Pancreas (tissue), 10 donors: ENCODE measurements at regions of chr20 and their contacts with region 1.

Region 1: DNA sequence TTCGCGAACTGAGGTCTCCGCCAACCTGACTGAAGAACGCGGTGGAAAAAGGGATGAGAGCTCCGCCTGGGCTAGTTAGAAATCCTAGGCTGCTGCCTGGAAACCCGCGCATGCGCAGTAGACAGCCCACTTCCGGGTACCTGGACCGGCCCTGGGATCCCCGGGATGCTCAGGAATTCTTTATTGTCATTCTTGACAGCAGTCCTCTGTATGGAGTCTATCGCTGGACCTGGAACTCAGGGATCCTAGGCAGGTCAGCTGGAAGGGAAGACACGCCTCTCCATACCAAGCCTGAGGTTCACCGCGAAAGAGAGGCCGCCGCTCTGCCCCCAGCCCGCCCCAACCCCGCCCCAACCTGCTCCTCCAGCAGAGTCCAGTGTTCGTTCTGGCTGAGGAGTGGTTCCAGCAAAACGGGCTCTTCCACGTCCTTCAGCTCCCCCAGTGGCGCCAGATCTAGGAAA is 1379.2 kb upstream of the DEFB115 start:
- DNase-seq: peak in 3 of 6 donors; percentile 30 to 82 (median 66)
- ATAC-seq: peak in 3 of 4 donors; percentile 38 to 61 (median 57)
- H3K4me3 ChIP-seq: no peak overlapping the region
- H3K27ac ChIP-seq: no peak overlapping the region
- H3K4me1 ChIP-seq: no peaks in the 10 kb centered on the region
- H3K27me3 ChIP-seq: no peaks in the 10 kb centered on the region
- CTCF ChIP-seq: no peak

Region 2: DNA sequence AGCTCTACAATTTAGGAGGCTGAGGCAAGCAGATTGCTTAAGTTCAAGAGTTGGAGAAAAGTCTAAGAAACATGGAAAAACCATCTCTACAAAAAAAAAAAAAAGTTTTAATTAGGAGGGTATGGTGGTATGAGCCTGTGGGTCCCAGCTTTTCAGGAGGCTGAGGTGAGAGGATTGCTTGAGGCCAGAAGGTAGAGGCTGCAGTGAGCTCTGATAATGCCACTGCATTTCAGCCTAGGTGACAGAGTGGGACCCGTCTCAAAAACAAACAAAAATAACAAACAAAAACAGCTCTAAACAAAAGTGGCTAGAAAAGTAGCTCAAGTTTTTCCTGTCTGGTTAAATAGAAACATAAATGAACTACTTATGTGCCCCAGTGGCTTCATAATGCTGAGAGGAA is 754.5 kb before region 1 on chr20:
- intact Hi-C with region 1: loop called in 1 of 3 experiments (anchors 5 kb)
- DNase-seq: no peak
- ATAC-seq: no peak
- H3K4me3 ChIP-seq: no peak overlapping the region
- H3K27ac ChIP-seq: no peak overlapping the region
- H3K4me1 ChIP-seq: no peaks in the 10 kb centered on the region
- H3K27me3 ChIP-seq: no peaks in the 10 kb centered on the region
- CTCF ChIP-seq: no peak

Region 3: GRCh38 chr20:29763821-29764511 is 114.3 kb before region 1 on chr20:
- intact Hi-C with region 1: no loop called
- DNase-seq: no peak
- ATAC-seq: no peak
- H3K4me3 ChIP-seq: no peak overlapping the region
- H3K27ac ChIP-seq: no peak overlapping the region
- H3K4me1 ChIP-seq: no peaks in the 10 kb centered on the region
- H3K27me3 ChIP-seq: no peaks in the 10 kb centered on the region
- CTCF ChIP-seq: no peak